ENCODE measurements at regions of chr13 and their contacts with region 1.

Region 1: DNA sequence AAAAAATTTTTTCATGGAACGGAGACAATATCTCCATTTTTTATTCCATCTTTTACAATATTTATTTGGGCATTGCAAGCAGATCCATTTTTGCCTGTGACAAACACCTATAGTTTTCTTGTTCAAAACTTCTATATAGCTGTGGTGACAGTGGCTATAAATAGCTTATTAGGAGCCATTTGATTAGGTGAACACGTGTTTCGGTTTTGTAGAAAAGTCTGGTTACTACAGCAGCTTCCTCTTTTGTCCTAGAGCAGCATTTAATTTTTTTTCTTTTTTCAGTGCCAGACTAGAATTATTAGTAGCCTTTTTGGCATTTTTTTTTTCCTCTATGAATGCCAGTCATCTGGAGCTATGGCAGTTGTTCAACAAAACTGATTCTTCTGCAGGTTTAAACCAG is 123.5 kb downstream of the RXFP2 start:
- DNase-seq: peak; percentile 33 to 86 (median 73)
- H3K4me3 ChIP-seq: peak overlapping the region in 1 of 7 experiments; percentile 31
- H3K27ac ChIP-seq: no peak overlapping the region
- H3K4me1 ChIP-seq: peaks cover 3 to 28% (median 22%) of the 10 kb centered on the region in 4 experiments
- H3K27me3 ChIP-seq: no peaks in the 10 kb centered on the region

Region 2: GRCh38 chr13:31850041-31850555 is 12.7 kb before region 1 on chr13:
- CTCF ChIA-PET with region 1: interaction called, 10 read pairs
- POLR2A ChIA-PET with region 1: interaction called, 4 read pairs
- DNase-seq: no peak
- H3K4me3 ChIP-seq: no peak overlapping the region
- H3K27ac ChIP-seq: no peak overlapping the region
- H3K4me1 ChIP-seq: peaks cover 0 to 11% (median 8%) of the 10 kb centered on the region in 4 experiments
- H3K27me3 ChIP-seq: peaks cover 0 to 11% (median 7%) of the 10 kb centered on the region in 5 experiments

Measured in common myeloid progenitor, CD34-positive (primary cell).